Psoas muscle (tissue), 8 donors: ENCODE measurements at regions of chr21 and their contacts with region 1.

Region 1: GRCh38 chr21:16419188-16419921 is 689.6 kb downstream of the USP25 start:
- DNase-seq: peak; percentile 50 to 76
- ATAC-seq: peak; percentile 77 to 83 (median 80)
- H3K4me3 ChIP-seq: peak overlapping the region; percentile 71
- H3K27ac ChIP-seq: peak overlapping the region; percentile 81
- H3K4me1 ChIP-seq: peaks cover 19% of the 10 kb centered on the region
- H3K27me3 ChIP-seq: no peaks in the 10 kb centered on the region
- CTCF ChIP-seq: no peak

Region 2: GRCh38 chr21:15706692-15707091 is 712.7 kb before region 1 on chr21:
- intact Hi-C with region 1: no loop called
- DNase-seq: no peak
- ATAC-seq: peak; percentile 91 to 98 (median 98)
- H3K4me3 ChIP-seq: no peak overlapping the region
- H3K27ac ChIP-seq: no peak overlapping the region
- H3K4me1 ChIP-seq: peaks cover 9% of the 10 kb centered on the region
- H3K27me3 ChIP-seq: no peaks in the 10 kb centered on the region
- CTCF ChIP-seq: no peak

Region 3: GRCh38 chr21:16194095-16194787 is 225.1 kb before region 1 on chr21:
- intact Hi-C with region 1: loop called in 1 of 2 experiments (anchors 5 kb)
- DNase-seq: peak; percentile 42 to 77
- ATAC-seq: peak; percentile 82 to 90 (median 86)
- H3K4me3 ChIP-seq: peak overlapping the region; percentile 66
- H3K27ac ChIP-seq: peak overlapping the region; percentile 85
- H3K4me1 ChIP-seq: peaks cover 8% of the 10 kb centered on the region
- H3K27me3 ChIP-seq: no peaks in the 10 kb centered on the region
- CTCF ChIP-seq: peak; percentile 42

Region 4: DNA sequence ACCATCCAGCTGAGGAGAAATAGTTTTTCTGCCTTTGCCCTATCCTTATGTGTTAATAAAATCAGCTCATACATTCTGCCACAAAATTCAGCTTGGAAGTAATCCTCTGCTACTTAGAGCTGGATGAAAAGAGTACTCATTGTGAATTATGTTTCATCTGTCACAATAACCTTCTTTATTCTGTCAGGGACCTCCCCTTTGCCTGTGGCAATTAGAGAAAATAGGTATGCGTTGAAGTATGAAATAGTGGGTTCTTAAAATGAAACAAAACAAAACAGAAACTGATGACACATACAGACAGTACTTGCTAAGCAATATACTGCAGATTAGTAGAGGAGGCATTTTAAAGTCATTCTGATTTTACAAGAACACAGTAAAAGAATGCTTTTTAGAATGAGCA is 111.1 kb before region 1 on chr21:
- intact Hi-C with region 1: loop called (anchors 5 to 10 kb)
- DNase-seq: no peak
- ATAC-seq: peak; percentile 29 to 65 (median 44)
- H3K4me3 ChIP-seq: peak overlapping the region; percentile 57
- H3K27ac ChIP-seq: peak overlapping the region; percentile 48
- H3K4me1 ChIP-seq: peaks cover 10% of the 10 kb centered on the region
- H3K27me3 ChIP-seq: no peaks in the 10 kb centered on the region
- CTCF ChIP-seq: no peak

Region 5: GRCh38 chr21:16377120-16377658 is 42.2 kb before region 1 on chr21:
- intact Hi-C with region 1: loop called (anchors 5 kb)
- DNase-seq: no peak
- ATAC-seq: peak; percentile 17 to 49 (median 48)
- H3K4me3 ChIP-seq: no peak overlapping the region
- H3K27ac ChIP-seq: peak overlapping the region; percentile 73
- H3K4me1 ChIP-seq: peaks cover 29% of the 10 kb centered on the region
- H3K27me3 ChIP-seq: no peaks in the 10 kb centered on the region
- CTCF ChIP-seq: no peak

Region 6: DNA sequence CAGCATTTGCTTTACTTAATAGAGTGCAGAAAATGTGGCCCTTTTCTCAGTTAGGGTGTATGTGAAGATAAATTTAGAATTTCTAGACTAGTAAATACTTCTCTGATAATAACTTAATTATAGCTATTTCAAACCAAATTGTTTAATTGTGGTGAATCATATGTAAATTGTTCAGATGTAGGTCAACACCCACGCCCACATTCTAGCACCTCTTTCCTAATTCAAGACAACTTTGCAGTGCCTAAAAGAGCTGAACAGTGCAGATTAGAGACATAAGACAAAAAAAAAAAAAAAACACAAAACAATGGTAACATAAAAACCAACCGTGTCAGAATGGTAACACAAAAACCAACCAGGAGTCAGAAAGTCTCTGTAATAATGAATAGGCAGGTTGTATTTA is 68.7 kb after region 1 on chr21:
- intact Hi-C with region 1: no loop called
- DNase-seq: no peak
- ATAC-seq: peak in 2 of 4 donors; percentile 43 to 58
- H3K4me3 ChIP-seq: no peak overlapping the region
- H3K27ac ChIP-seq: no peak overlapping the region
- H3K4me1 ChIP-seq: peaks cover 17% of the 10 kb centered on the region
- H3K27me3 ChIP-seq: no peaks in the 10 kb centered on the region
- CTCF ChIP-seq: no peak

Region 7: DNA sequence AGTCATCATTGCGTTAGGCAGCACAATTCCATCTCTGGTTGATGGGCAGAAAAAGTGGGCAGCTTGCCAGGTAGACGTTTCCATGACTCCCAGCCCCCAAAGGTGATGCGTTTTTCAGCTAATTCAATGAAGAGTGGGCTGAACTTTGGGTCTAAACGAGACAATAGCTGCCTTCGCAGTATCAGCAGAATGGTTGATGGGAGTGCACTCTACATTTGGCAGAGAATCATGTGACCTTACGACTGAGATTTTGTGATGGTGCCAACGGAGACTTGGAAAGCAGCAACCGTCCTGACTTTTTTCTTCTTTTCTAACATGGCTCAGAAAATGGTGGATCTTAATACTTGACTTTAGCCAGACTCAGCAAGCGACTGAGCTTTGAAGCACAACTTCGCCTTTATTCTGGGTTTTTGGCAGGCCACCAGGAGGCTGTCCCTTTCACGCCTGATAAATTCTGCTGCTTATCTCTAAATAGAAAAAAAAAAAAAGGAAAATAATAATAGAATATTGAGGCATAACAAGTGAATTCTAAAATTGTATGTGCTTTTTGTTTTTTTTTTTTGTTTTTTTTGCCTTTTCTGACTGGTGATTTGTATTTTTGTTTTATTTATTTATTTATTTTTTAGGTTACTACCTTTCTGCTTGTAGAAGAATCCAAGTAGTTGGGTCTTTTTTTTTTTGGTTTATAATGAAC is 115.2 kb after region 1 on chr21:
- intact Hi-C with region 1: loop called (anchors 1 to 5 kb)
- DNase-seq: peak; percentile 75 to 85
- ATAC-seq: peak; percentile 67 to 79 (median 75)
- H3K4me3 ChIP-seq: peak overlapping the region; percentile 74
- H3K27ac ChIP-seq: peak overlapping the region; percentile 87
- H3K4me1 ChIP-seq: peaks cover 19% of the 10 kb centered on the region
- H3K27me3 ChIP-seq: no peaks in the 10 kb centered on the region
- CTCF ChIP-seq: no peak

Region 8: DNA sequence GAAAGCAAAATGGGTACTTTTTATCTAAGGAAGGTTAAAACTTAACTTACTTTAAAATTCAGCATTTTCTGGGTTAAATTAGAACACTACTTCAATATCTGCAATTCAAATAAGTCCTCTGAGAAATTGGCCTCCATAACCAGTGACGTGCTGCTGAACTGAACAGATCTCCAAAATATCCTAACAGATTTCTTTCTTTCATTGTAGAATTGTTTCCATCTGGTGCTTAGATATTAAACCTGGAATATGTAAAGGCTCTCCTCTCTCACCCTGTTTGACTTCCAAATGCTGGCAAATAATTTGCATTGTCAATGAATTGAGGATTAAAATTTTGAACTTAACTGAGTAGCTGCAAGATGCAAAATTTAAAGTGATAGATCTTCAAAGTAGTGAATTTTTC is 776.6 kb after region 1 on chr21:
- intact Hi-C with region 1: no loop called
- DNase-seq: no peak
- ATAC-seq: no peak
- H3K4me3 ChIP-seq: no peak overlapping the region
- H3K27ac ChIP-seq: no peak overlapping the region
- H3K4me1 ChIP-seq: no peaks in the 10 kb centered on the region
- H3K27me3 ChIP-seq: no peaks in the 10 kb centered on the region
- CTCF ChIP-seq: no peak

Region 9: GRCh38 chr21:17210546-17210945 is 791.2 kb after region 1 on chr21:
- intact Hi-C with region 1: no loop called
- DNase-seq: no peak
- ATAC-seq: no peak
- H3K4me3 ChIP-seq: no peak overlapping the region
- H3K27ac ChIP-seq: no peak overlapping the region
- H3K4me1 ChIP-seq: no peaks in the 10 kb centered on the region
- H3K27me3 ChIP-seq: no peaks in the 10 kb centered on the region
- CTCF ChIP-seq: no peak